Heart left ventricle (tissue), 16 donors: ENCODE measurements at regions of chr21 and their contacts with region 1.

Region 1: GRCh38 chr21:40143822-40144525 is 276.7 kb downstream of the PCP4 start:
- DNase-seq: peak in 2 of 5 donors; percentile 24 to 45
- ATAC-seq: peak in 1 of 4 donors; percentile 51
- H3K4me3 ChIP-seq: no peak overlapping the region
- H3K27ac ChIP-seq: no peak overlapping the region
- H3K4me1 ChIP-seq: no peaks in the 10 kb centered on the region
- H3K27me3 ChIP-seq: peaks cover 0 to 6% (median 0%) of the 10 kb centered on the region in 9 donors
- CTCF ChIP-seq: peak; percentile 60 to 85 (median 76)
- POLR2A ChIP-seq: no peak

Region 2: GRCh38 chr21:39269620-39270019 is 874.4 kb before region 1 on chr21:
- intact Hi-C with region 1: no loop called
- DNase-seq: no peak
- ATAC-seq: no peak
- H3K4me3 ChIP-seq: no peak overlapping the region
- H3K27ac ChIP-seq: no peak overlapping the region
- H3K4me1 ChIP-seq: no peaks in the 10 kb centered on the region
- H3K27me3 ChIP-seq: no peaks in the 10 kb centered on the region
- CTCF ChIP-seq: no peak
- POLR2A ChIP-seq: no peak

Region 3: DNA sequence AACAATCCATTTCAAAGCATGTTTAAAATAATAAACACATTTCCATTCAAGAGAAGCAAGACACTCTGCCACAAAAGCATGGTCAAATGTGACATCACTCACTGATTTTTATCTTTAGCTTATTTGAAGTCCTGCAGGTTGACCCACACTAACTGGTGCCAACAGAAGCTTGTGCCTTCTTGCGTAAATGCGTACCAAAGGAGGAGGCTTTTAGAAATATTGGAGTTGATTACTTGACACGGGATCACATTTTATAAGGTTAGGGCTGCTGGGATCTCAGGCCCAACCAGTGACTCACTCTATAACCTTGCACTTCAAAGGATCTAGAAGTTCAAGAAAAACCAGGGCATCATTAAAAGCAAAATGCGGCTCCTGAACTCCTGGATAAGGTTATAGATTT is 73.1 kb before region 1 on chr21:
- intact Hi-C with region 1: no loop called
- DNase-seq: no peak
- ATAC-seq: no peak
- H3K4me3 ChIP-seq: no peak overlapping the region
- H3K27ac ChIP-seq: peak overlapping the region in 1 of 12 donors; percentile 64
- H3K4me1 ChIP-seq: peaks cover 0 to 8% (median 0%) of the 10 kb centered on the region in 12 donors
- H3K27me3 ChIP-seq: peaks cover 0 to 3% (median 0%) of the 10 kb centered on the region in 9 donors
- CTCF ChIP-seq: no peak
- POLR2A ChIP-seq: no peak

Region 4: DNA sequence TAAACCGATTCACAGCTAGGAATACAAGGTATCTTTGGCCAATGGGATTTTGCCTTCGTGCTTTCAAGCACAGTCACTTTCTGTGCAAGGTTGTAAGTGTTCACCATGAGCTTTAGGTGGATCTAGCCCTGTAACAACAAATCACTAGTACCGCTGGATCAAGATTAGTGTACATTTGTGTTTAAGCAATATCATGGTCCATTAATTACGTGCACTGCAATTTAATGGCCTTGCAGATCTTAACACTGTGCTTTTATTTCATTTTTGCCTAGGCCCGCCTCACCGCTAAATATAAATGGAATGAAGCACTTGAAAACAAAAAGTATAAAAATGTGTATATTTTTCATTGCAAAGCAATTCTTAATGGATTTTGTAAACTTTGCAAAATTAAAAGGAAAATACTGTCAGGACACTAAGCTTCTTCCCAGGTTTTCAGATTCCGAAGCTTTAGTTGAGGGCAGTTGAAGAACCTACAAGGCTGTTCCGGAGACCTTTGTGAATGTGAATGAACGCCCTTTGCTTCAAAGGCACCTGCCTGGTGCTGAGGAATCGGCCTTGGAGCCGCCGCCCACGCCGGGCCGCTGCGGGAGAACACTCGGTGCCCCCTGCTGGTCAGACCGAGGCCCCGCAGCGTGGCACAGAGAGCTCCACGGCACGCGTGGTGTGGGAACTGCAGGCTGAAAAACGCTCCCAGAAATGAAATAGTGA is 242.1 kb after region 1 on chr21:
- intact Hi-C with region 1: loop called (anchors 1 to 5 kb)
- DNase-seq: peak; percentile 23 to 73 (median 45)
- ATAC-seq: peak; percentile 37 to 83 (median 75)
- H3K4me3 ChIP-seq: no peak overlapping the region
- H3K27ac ChIP-seq: no peak overlapping the region
- H3K4me1 ChIP-seq: peaks cover 0 to 4% (median 0%) of the 10 kb centered on the region in 12 donors
- H3K27me3 ChIP-seq: peaks cover 0 to 12% (median 0%) of the 10 kb centered on the region in 9 donors
- CTCF ChIP-seq: peak; percentile 60 to 87 (median 80)
- POLR2A ChIP-seq: no peak

Region 5: DNA sequence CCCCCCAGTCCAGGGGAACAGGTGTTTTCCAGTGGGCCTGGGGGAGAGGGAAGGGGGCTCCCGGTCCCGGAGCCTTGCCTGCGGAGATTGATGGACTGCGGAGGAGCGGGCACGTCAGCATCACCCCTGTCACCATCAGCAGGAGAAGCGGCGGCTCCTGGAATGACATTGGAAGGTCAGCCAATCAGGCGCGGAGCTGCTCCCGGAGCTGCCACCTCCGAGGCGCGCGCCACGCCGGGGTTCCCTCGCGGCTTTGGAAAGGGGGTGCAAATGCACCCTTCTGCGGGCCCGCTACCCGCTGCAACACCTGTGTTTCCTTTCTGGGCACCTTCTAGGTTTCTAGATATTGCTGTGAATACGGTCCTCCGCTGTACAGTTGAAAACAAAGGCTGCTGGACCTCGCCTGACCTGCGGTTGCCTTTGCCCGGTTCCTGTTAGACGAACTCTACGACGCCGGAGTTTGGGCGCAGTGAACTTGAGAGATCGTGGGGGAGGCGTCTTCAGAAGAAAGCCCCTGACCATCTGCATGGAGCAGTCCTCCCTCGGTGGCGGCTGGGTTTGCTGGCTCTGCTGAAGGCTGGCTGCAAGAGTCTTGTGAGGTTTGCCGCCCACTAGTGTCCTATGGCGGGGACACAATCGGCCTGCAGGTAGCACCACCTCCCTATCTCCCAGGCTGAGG is 697.7 kb after region 1 on chr21:
- intact Hi-C with region 1: loop called in 2 of 10 experiments (anchors 10 kb)
- DNase-seq: peak in 4 of 5 donors; percentile 29 to 65 (median 43)
- ATAC-seq: peak in 3 of 4 donors; percentile 86 to 89 (median 88)
- H3K4me3 ChIP-seq: peak overlapping the region in 8 of 12 donors; percentile 18 to 34 (median 24)
- H3K27ac ChIP-seq: no peak overlapping the region
- H3K4me1 ChIP-seq: peaks cover 0 to 12% (median 0%) of the 10 kb centered on the region in 12 donors
- H3K27me3 ChIP-seq: peaks cover 4 to 84% (median 32%) of the 10 kb centered on the region in 9 donors
- CTCF ChIP-seq: peak in 11 of 12 donors; percentile 17 to 55 (median 31)
- POLR2A ChIP-seq: no peak

Region 6: GRCh38 chr21:41068967-41069642 is 925.1 kb after region 1 on chr21:
- intact Hi-C with region 1: loop called (anchors 2 to 10 kb)
- DNase-seq: peak; percentile 75 to 92 (median 87)
- ATAC-seq: peak; percentile 59 to 90 (median 86)
- H3K4me3 ChIP-seq: peak overlapping the region in 10 of 12 donors; percentile 18 to 46 (median 40)
- H3K27ac ChIP-seq: no peak overlapping the region
- H3K4me1 ChIP-seq: peaks cover 0 to 10% (median 6%) of the 10 kb centered on the region in 12 donors
- H3K27me3 ChIP-seq: peaks cover 0 to 24% (median 7%) of the 10 kb centered on the region in 9 donors
- CTCF ChIP-seq: peak; percentile 77 to 95 (median 90)
- POLR2A ChIP-seq: no peak

Region 7: DNA sequence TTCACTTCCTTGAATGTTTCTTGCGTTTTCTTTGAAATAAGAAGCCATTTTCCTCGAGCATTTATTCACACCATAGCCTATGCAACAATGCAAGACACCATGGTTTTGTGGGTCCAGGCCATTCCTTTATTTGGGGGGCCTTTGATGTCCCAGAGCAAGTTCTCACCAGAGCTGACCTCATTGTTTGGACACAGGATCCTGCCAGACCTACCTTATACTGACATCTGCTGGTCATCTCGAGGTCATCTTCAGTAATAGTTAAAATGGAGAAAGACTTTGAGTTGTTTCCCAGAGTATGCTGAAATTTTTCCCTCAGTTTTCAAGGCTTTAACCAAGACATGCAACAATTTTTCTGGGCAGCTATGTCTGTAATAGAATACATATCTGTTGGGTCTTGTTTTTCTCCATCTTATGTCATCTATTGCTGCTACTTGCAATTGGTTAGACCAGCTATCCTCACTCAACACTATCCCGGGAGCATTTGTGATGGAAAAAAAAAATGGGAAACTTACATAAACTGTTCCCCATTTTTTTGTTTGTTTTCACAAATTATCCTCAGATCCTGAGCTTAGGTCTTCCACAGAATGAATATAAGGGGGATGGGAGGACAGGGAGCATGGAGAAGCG is 990.0 kb after region 1 on chr21:
- intact Hi-C with region 1: loop called in 2 of 10 experiments (anchors 5 kb)
- DNase-seq: no peak
- ATAC-seq: peak in 2 of 4 donors; percentile 43 to 44
- H3K4me3 ChIP-seq: no peak overlapping the region
- H3K27ac ChIP-seq: no peak overlapping the region
- H3K4me1 ChIP-seq: no peaks in the 10 kb centered on the region
- H3K27me3 ChIP-seq: peaks cover 0 to 6% (median 0%) of the 10 kb centered on the region in 9 donors
- CTCF ChIP-seq: peak; percentile 20 to 64 (median 48)
- POLR2A ChIP-seq: no peak